ENCODE measurements at regions of chr15 and their contacts with region 1.

Region 1: DNA sequence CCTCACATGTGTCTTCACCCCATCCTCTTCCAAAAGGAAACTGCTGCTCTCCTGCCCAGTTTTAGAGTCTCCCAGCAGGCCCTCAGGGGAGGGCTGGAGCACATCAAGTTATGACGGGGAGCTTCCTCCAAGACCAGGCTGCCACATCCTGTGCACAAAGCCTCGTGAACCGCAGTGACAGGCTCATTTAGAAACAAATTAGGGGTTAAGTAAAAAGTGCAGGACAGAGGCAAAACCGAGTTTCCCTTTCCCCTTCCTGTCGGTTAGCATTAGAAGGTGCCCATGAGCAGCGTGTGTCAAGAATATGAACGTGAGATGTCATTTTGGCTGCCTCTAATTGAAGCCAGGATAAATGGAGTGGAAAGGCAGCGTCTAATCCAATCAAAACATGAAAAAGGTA is 199.7 kb downstream of the ARRDC4 start:
- DNase-seq: no peak
- H3K4me3 ChIP-seq: no peak overlapping the region
- H3K27ac ChIP-seq: no peak overlapping the region
- H3K4me1 ChIP-seq: peaks cover 26% of the 10 kb centered on the region
- H3K27me3 ChIP-seq: no peaks in the 10 kb centered on the region
- CTCF ChIP-seq: no peak

Region 2: DNA sequence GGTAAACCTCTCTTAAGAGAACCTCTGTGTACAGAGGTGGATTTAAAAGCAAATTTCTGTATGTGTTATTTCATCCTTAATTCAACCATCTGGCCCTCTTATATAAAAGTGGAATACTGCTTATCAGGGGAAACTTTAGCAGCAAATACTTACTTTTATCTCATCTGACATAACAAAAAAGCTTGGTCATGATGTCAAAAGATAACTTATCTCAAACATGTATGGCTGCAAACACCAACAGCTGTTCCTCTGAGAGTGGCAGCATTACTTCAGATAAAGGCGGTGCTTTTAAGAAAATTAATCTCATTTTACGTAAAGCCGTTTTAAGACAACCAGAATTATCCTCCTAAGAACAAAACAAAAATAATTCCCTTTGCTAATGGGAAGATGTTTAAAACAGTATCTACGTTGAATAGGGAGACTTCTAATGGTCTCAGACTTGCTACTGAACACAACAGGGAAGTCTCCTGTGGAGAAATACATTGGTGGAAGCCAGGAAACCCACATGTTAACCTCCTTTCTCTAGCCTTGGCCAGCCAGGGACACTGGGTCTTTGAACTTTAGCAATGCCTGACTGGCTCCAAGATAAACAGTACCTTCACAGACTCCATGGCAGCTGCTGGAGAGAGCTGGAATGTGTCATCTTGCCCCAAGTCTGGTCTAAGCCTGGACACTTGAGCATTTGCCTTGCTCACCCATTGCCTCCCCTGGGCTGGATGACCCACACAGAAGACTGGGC is 181.7 kb before region 1 on chr15:
- CTCF ChIA-PET with region 1: no interaction called
- dilution Hi-C with region 1: loop called (anchors 10 kb)
- in situ Hi-C with region 1: no loop called
- intact Hi-C with region 1: no loop called
- DNase-seq: no peak
- H3K4me3 ChIP-seq: no peak overlapping the region
- H3K27ac ChIP-seq: no peak overlapping the region
- H3K4me1 ChIP-seq: peaks cover 23% of the 10 kb centered on the region
- H3K27me3 ChIP-seq: no peaks in the 10 kb centered on the region
- CTCF ChIP-seq: no peak

Region 3: DNA sequence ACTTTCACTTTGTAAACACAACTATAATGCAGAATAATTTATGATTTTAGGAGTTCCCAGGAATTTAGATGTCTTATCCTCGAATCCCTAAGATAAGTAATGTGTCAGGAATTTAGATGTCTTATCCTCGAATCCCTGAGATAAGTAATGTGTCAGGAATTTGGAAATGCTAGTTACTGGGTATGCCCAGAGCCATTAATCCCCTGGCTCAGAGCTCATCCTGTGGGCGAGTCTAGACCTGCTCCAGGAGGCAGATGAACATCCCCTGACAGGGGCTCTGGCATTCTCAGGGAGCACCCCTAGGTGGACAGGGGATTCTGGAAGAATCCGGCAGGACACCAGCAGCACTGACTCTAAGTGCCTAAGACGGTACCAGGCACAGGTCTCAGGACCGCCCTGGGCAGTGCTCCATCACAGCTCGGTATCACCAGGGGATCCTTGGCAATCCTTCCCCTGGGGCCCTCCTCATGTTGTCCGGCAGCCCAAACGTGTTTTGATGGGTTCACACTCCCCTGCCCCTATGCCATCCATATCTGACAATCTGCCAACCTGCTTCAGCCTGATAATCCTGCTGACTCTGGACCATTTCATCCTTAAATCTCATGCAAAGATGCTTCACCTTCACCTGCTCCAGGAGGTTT is 36.3 kb before region 1 on chr15:
- CTCF ChIA-PET with region 1: no interaction called
- dilution Hi-C with region 1: no loop called
- in situ Hi-C with region 1: no loop called
- intact Hi-C with region 1: loop called (anchors 2 kb)
- DNase-seq: peak; percentile 70
- H3K4me3 ChIP-seq: no peak overlapping the region
- H3K27ac ChIP-seq: peak overlapping the region; percentile 35
- H3K4me1 ChIP-seq: peaks cover 41% of the 10 kb centered on the region
- H3K27me3 ChIP-seq: no peaks in the 10 kb centered on the region
- CTCF ChIP-seq: no peak

Measured in mammary epithelial cell (primary cell).